ENCODE measurements at regions of chr13 and their contacts with region 1.

Region 1: DNA sequence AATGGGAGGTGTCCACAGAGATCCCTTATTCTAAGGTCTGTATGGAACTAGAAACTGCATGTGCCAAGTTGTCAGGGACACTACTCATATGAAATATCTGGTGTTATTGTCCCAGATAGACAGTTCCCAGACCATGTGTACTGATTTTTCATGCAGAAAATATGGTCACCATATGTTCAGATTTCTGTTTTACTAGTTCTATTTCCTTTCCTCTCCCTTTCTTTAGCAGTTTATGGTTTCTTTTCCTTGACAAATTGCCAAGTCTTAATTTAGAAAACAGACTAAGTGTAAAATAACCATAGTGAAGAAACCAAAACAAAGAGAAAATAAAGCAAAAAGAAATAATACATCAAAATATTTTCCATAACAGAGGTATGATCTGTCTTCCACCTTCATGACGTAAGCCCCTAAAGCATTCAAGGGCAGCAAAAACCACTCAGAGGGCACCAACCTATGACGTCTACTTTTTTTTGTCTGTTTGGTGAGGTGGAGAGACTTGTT is 248.5 kb downstream of the KCTD12 start:
- DNase-seq: no peak
- H3K4me3 ChIP-seq: no peak overlapping the region
- H3K4me3 Mint-ChIP-seq: no peak overlapping the region
- H3K27ac Mint-ChIP-seq: no peak overlapping the region
- H3K4me1 ChIP-seq: no peaks in the 10 kb centered on the region
- H3K4me1 Mint-ChIP-seq: no peaks in the 10 kb centered on the region
- H3K27me3 ChIP-seq: no peaks in the 10 kb centered on the region
- H3K27me3 Mint-ChIP-seq: peaks cover 15% of the 10 kb centered on the region
- CTCF ChIP-seq: no peak

Region 2: DNA sequence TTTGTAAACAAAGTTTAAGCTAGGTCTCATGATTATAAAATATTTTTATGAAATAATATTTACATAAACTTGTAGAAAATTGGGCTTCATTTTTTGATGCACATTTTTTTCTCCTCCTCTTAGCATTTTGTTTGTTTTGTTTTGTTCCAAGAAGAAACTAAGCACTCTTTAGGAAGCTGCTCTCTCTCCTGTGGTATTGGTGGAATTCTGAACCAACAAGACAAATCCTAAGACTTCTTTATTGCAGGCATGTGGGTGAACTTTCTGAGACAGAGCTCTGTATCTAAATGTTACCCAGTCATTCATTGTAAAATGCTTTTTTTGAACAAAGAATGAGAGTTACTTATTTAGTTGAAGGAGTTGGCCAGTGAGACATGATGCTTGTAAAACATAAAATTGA is 962.3 kb before region 1 on chr13:
- CTCF ChIA-PET with region 1: no interaction called
- POLR2A ChIA-PET with region 1: no interaction called
- intact Hi-C with region 1: loop called (anchors 10 kb)
- DNase-seq: no peak
- H3K4me3 ChIP-seq: no peak overlapping the region
- H3K4me3 Mint-ChIP-seq: no peak overlapping the region
- H3K27ac Mint-ChIP-seq: no peak overlapping the region
- H3K4me1 ChIP-seq: no peaks in the 10 kb centered on the region
- H3K4me1 Mint-ChIP-seq: no peaks in the 10 kb centered on the region
- H3K27me3 ChIP-seq: no peaks in the 10 kb centered on the region
- H3K27me3 Mint-ChIP-seq: no peaks in the 10 kb centered on the region
- CTCF ChIP-seq: no peak